ENCODE measurements at regions of chr2 and their contacts with region 1.

Region 1: DNA sequence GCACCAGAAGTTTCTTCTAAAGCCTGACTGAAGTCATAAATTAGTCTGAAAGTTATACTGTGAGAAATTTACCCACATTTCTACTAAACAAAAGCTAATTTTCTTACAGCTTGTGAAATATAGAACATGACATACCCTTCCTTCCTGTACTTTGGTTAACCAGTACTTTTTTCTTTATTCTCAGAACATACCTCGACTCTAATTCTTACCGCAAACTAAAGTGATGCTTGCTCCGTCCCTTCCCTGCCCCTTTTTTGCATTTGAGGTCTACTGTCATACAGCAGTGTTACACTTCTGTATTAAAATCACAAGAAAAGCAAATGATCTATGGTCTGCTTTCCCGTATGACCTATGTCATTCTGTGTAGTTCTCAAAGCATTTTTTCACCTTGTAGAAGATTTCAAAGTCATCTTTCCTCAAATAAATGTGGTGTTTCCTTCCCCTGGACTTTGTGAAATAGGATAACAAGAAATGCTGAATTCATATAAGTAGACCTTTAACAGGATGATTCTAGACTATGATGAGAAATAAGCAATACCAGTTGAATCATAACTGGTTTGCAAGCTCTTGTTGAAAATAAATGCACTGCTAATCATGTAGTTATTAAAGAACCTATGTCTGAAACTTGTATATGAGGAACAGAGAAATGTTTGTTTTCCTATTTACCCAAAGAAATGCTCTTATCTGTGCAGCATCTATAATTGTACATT is 30.4 kb downstream of the CYTIP start:
- DNase-seq: peak; percentile 59
- H3K4me3 Mint-ChIP-seq: peak overlapping the region; percentile 74
- H3K27ac Mint-ChIP-seq: peak overlapping the region; percentile 96
- H3K4me1 Mint-ChIP-seq: peaks cover 74% of the 10 kb centered on the region
- H3K27me3 Mint-ChIP-seq: no peaks in the 10 kb centered on the region

Region 2: GRCh38 chr2:157327621-157328500 is 85.6 kb before region 1 on chr2:
- intact Hi-C with region 1: loop called (anchors 2 kb)
- DNase-seq: peak; percentile 72
- H3K4me3 Mint-ChIP-seq: no peak overlapping the region
- H3K27ac Mint-ChIP-seq: no peak overlapping the region
- H3K4me1 Mint-ChIP-seq: peaks cover 31% of the 10 kb centered on the region
- H3K27me3 Mint-ChIP-seq: no peaks in the 10 kb centered on the region

Region 3: GRCh38 chr2:157468931-157469708 is 55.6 kb after region 1 on chr2:
- intact Hi-C with region 1: loop called (anchors 2 kb)
- DNase-seq: no peak
- H3K4me3 Mint-ChIP-seq: peak overlapping the region; percentile 69
- H3K27ac Mint-ChIP-seq: peak overlapping the region; percentile 96
- H3K4me1 Mint-ChIP-seq: peaks cover 86% of the 10 kb centered on the region
- H3K27me3 Mint-ChIP-seq: no peaks in the 10 kb centered on the region

Region 4: GRCh38 chr2:157480182-157480961 is 66.9 kb after region 1 on chr2:
- intact Hi-C with region 1: loop called (anchors 2 kb)
- DNase-seq: no peak
- H3K4me3 Mint-ChIP-seq: peak overlapping the region; percentile 68
- H3K27ac Mint-ChIP-seq: peak overlapping the region; percentile 91
- H3K4me1 Mint-ChIP-seq: peaks cover 70% of the 10 kb centered on the region
- H3K27me3 Mint-ChIP-seq: no peaks in the 10 kb centered on the region

Region 5: GRCh38 chr2:157751462-157752058 is 338.1 kb after region 1 on chr2:
- intact Hi-C with region 1: loop called (anchors 10 kb)
- DNase-seq: no peak
- H3K4me3 Mint-ChIP-seq: no peak overlapping the region
- H3K27ac Mint-ChIP-seq: no peak overlapping the region
- H3K4me1 Mint-ChIP-seq: peaks cover 30% of the 10 kb centered on the region
- H3K27me3 Mint-ChIP-seq: no peaks in the 10 kb centered on the region

Measured in activated T-helper 2 cell treated with anti-CD3 and anti-CD28 coated beads, Interferon-gamma antibody, Interleukin-2, Interleukin-4, amounts not matched to agents 10 μg/mL and 5 μg/mL and 100 μg/mL, durations not matched to agents 14 hours and 24 hours and 36 hours (primary cell).